CD4-positive, alpha-beta T cell (primary cell): ENCODE measurements at regions of chr19 and their contacts with region 1.

Region 1: GRCh38 chr19:43934985-43935708 is at the start of gene ZNF45:
- DNase-seq: peak; percentile 75 to 94 (median 82)
- ATAC-seq: peak; percentile 95
- H3K4me3 ChIP-seq: peak within 1 kb of the TSS; percentile 78
- H3K4me3 Mint-ChIP-seq: peak within 1 kb of the TSS; percentile 96
- H3K27ac ChIP-seq: peak within 1 kb of the TSS; percentile 56 to 64
- H3K27ac Mint-ChIP-seq: peak within 1 kb of the TSS; percentile 86
- H3K4me1 ChIP-seq: peaks cover 10% of the 10 kb centered on the region
- H3K4me1 Mint-ChIP-seq: peaks cover 25% of the 10 kb centered on the region
- H3K27me3 ChIP-seq: no peaks in the 10 kb centered on the region
- H3K27me3 Mint-ChIP-seq: no peaks in the 10 kb centered on the region
- CTCF ChIP-seq: no peak
- total RNA-seq, gene ZNF45: 4.0 to 4.6 TPM

Region 2: GRCh38 chr19:42850981-42851717 is 1084.0 kb before region 1 on chr19:
- CTCF ChIA-PET with region 1: no interaction called
- POLR2A ChIA-PET with region 1: no interaction called
- intact Hi-C with region 1: no loop called
- DNase-seq: no peak
- ATAC-seq: no peak
- H3K4me3 ChIP-seq: no peak overlapping the region
- H3K4me3 Mint-ChIP-seq: no peak overlapping the region
- H3K27ac ChIP-seq: no peak overlapping the region
- H3K27ac Mint-ChIP-seq: no peak overlapping the region
- H3K4me1 ChIP-seq: no peaks in the 10 kb centered on the region
- H3K4me1 Mint-ChIP-seq: no peaks in the 10 kb centered on the region
- H3K27me3 ChIP-seq: no peaks in the 10 kb centered on the region
- H3K27me3 Mint-ChIP-seq: peaks cover 2% of the 10 kb centered on the region
- CTCF ChIP-seq: no peak

Region 3: GRCh38 chr19:43826787-43827754 is 108.1 kb before region 1 on chr19 and contains the start of gene ZNF283:
- CTCF ChIA-PET with region 1: no interaction called
- POLR2A ChIA-PET with region 1: interaction called, 8 read pairs
- intact Hi-C with region 1: loop called in 1 of 2 experiments (anchors 5 kb)
- DNase-seq: peak; percentile 63 to 89 (median 79)
- ATAC-seq: peak; percentile 95
- H3K4me3 ChIP-seq: peak within 1 kb of the TSS; percentile 77
- H3K4me3 Mint-ChIP-seq: peak within 1 kb of the TSS; percentile 84
- H3K27ac ChIP-seq: no peak within 1 kb of the TSS
- H3K27ac Mint-ChIP-seq: peak within 1 kb of the TSS; percentile 12
- H3K4me1 ChIP-seq: peaks cover 16% of the 10 kb centered on the region
- H3K4me1 Mint-ChIP-seq: peaks cover 18% of the 10 kb centered on the region
- H3K27me3 ChIP-seq: no peaks in the 10 kb centered on the region
- H3K27me3 Mint-ChIP-seq: peaks cover 14% of the 10 kb centered on the region
- CTCF ChIP-seq: no peak
- total RNA-seq, gene ZNF283: 2.3 to 3.7 TPM

Region 4: GRCh38 chr19:43983912-43984686 is 49.0 kb after region 1 on chr19 and contains the start of gene ZNF155:
- CTCF ChIA-PET with region 1: no interaction called
- POLR2A ChIA-PET with region 1: interaction called, 4 read pairs
- intact Hi-C with region 1: loop called in 1 of 2 experiments (anchors 1 kb)
- DNase-seq: peak; percentile 39 to 88 (median 56)
- ATAC-seq: peak; percentile 88
- H3K4me3 ChIP-seq: peak within 1 kb of the TSS; percentile 85
- H3K4me3 Mint-ChIP-seq: peak within 1 kb of the TSS; percentile 97
- H3K27ac ChIP-seq: peak within 1 kb of the TSS in 1 of 2 donors; percentile 72
- H3K27ac Mint-ChIP-seq: peak within 1 kb of the TSS; percentile 83
- H3K4me1 ChIP-seq: peaks cover 16% of the 10 kb centered on the region
- H3K4me1 Mint-ChIP-seq: peaks cover 22% of the 10 kb centered on the region
- H3K27me3 ChIP-seq: no peaks in the 10 kb centered on the region
- H3K27me3 Mint-ChIP-seq: no peaks in the 10 kb centered on the region
- CTCF ChIP-seq: no peak
- total RNA-seq, gene ZNF155: 3.5 to 4.0 TPM

Region 5: GRCh38 chr19:44071824-44072542 is 136.8 kb after region 1 on chr19 and contains the start of gene ZNF284:
- CTCF ChIA-PET with region 1: no interaction called
- POLR2A ChIA-PET with region 1: interaction called, 4 read pairs
- intact Hi-C with region 1: loop called in 1 of 2 experiments (anchors 5 kb)
- DNase-seq: peak; percentile 65 to 93 (median 78)
- ATAC-seq: peak; percentile 98
- H3K4me3 ChIP-seq: peak within 1 kb of the TSS; percentile 78
- H3K4me3 Mint-ChIP-seq: peak within 1 kb of the TSS; percentile 90
- H3K27ac ChIP-seq: peak within 1 kb of the TSS; percentile 39 to 43
- H3K27ac Mint-ChIP-seq: peak within 1 kb of the TSS; percentile 79
- H3K4me1 ChIP-seq: peaks cover 18% of the 10 kb centered on the region
- H3K4me1 Mint-ChIP-seq: peaks cover 24% of the 10 kb centered on the region
- H3K27me3 ChIP-seq: no peaks in the 10 kb centered on the region
- H3K27me3 Mint-ChIP-seq: no peaks in the 10 kb centered on the region
- CTCF ChIP-seq: no peak
- total RNA-seq, gene ZNF284: 0.92 to 1.2 TPM

Region 6: DNA sequence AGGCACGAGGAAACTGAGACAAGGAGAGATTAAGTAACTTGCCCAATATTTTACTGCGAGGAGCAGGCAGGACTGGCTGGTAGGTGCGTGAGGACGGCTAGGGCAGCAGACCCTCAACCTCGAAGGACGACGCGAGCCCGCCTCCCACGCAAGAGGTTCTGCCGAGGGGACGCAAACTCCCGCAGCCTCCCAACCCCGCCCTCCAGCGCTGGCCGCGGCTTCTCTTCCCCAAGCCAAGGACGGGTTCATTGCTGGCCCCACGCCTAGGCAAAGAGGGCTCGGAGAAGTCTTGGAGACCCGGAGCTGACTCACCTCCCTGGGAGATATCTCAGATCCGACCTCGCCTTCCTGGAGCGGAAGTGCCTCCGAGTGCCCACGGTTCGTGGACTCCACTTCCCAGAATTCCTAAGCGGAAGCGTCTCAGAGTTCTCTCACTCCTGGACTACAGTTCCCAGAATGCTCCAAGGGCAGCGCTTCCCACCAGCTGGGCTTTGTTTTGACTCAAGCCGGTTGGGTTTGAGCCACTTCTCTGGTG is 369.6 kb after region 1 on chr19 and contains the start of gene ZNF235:
- CTCF ChIA-PET with region 1: no interaction called
- POLR2A ChIA-PET with region 1: no interaction called
- intact Hi-C with region 1: loop called in 1 of 2 experiments (anchors 5 kb)
- DNase-seq: peak; percentile 24 to 88 (median 60)
- ATAC-seq: peak; percentile 97
- H3K4me3 ChIP-seq: peak within 1 kb of the TSS; percentile 96
- H3K4me3 Mint-ChIP-seq: peak within 1 kb of the TSS; percentile 92
- H3K27ac ChIP-seq: peak within 1 kb of the TSS in 1 of 2 donors; percentile 58
- H3K27ac Mint-ChIP-seq: peak within 1 kb of the TSS; percentile 11
- H3K4me1 ChIP-seq: peaks cover 19% of the 10 kb centered on the region
- H3K4me1 Mint-ChIP-seq: peaks cover 18% of the 10 kb centered on the region
- H3K27me3 ChIP-seq: no peaks in the 10 kb centered on the region
- H3K27me3 Mint-ChIP-seq: peaks cover 5% of the 10 kb centered on the region
- CTCF ChIP-seq: no peak
- total RNA-seq, gene ZNF235: 2.4 TPM